ENCODE measurements at regions of chr4 and their contacts with region 1.

Region 1: GRCh38 chr4:2662598-2662997 is 93.5 kb downstream of the TNIP2 start:
- DNase-seq: no peak
- H3K4me3 Mint-ChIP-seq: no peak overlapping the region
- H3K27ac Mint-ChIP-seq: no peak overlapping the region
- H3K4me1 Mint-ChIP-seq: peaks cover 18% of the 10 kb centered on the region
- H3K27me3 Mint-ChIP-seq: no peaks in the 10 kb centered on the region

Region 2: DNA sequence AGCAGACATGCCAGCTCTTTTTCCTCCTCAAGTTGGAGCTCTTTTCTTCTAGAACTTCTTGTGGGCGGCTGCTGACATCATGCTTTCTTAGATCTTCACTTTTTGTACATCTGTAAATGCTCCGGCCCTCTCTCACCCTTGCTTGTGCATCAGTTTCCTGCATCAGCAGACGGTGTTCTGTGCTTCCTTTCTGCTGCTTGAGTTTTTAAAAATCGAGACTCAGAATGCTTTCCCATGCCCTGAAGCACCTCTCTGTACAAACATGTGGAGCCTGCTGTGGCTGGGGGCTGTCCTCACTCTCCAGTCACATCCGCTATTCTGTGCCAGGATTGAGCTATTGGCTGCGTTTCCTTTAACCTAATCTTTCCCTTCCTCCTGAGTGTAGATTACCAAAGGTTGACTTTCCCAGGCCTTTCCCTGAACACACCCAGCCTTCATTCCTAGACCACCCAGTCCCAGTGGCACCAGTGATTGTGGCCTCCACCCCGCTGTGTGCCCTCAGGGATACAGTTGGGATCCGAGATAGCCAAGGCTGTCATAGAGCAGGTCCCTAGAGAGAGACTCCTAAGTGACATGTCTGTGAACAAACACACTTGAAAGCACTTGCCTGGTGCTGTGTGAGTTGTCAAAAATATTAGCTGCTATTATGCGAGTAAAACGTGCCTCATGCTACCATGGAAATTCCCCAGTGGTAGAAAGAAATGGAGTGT is 51.6 kb after region 1 on chr4:
- intact Hi-C with region 1: loop called (anchors 10 kb)
- DNase-seq: peak; percentile 20
- H3K4me3 Mint-ChIP-seq: no peak overlapping the region
- H3K27ac Mint-ChIP-seq: peak overlapping the region; percentile 81
- H3K4me1 Mint-ChIP-seq: peaks cover 21% of the 10 kb centered on the region
- H3K27me3 Mint-ChIP-seq: no peaks in the 10 kb centered on the region

Region 3: GRCh38 chr4:2755837-2756694 is 93.5 kb after region 1 on chr4 and contains the start of gene TNIP2:
- intact Hi-C with region 1: no loop called
- DNase-seq: peak; percentile 79
- H3K4me3 Mint-ChIP-seq: peak within 1 kb of the TSS; percentile 88
- H3K27ac Mint-ChIP-seq: peak within 1 kb of the TSS; percentile 70
- H3K4me1 Mint-ChIP-seq: peaks cover 19% of the 10 kb centered on the region
- H3K27me3 Mint-ChIP-seq: no peaks in the 10 kb centered on the region
- total RNA-seq, gene TNIP2: 69.2 and 72.1 TPM in 2 replicates

Region 4: GRCh38 chr4:2843263-2843940 is 180.8 kb after region 1 on chr4 and contains the start of gene ADD1:
- intact Hi-C with region 1: no loop called
- DNase-seq: peak; percentile 95
- H3K4me3 Mint-ChIP-seq: peak within 1 kb of the TSS; percentile 89
- H3K27ac Mint-ChIP-seq: peak within 1 kb of the TSS; percentile 82
- H3K4me1 Mint-ChIP-seq: peaks cover 36% of the 10 kb centered on the region
- H3K27me3 Mint-ChIP-seq: no peaks in the 10 kb centered on the region
- total RNA-seq, gene ADD1: 240 and 242 TPM in 2 replicates

Region 5: GRCh38 chr4:3248811-3249661 is 586.4 kb after region 1 on chr4 and contains the start of gene MSANTD1:
- intact Hi-C with region 1: no loop called
- DNase-seq: no peak
- H3K4me3 Mint-ChIP-seq: no peak within 1 kb of the TSS
- H3K27ac Mint-ChIP-seq: no peak within 1 kb of the TSS
- H3K4me1 Mint-ChIP-seq: peaks cover 4% of the 10 kb centered on the region
- H3K27me3 Mint-ChIP-seq: no peaks in the 10 kb centered on the region
- total RNA-seq, gene MSANTD1: 0.64 and 0.68 TPM in 2 replicates

Measured in activated T-helper 2 cell treated with anti-CD3 and anti-CD28 coated beads, Interferon-gamma antibody, Interleukin-2, Interleukin-4, amounts not matched to agents 10 μg/mL and 5 μg/mL and 100 μg/mL, durations not matched to agents 14 hours and 24 hours and 36 hours (primary cell).